ENCODE measurements at regions of chr16 and their contacts with region 1.

Region 1: GRCh38 chr16:49478107-49478506 is 104.5 kb downstream of the C16orf78 start:
- DNase-seq: no peak
- ATAC-seq: peak; percentile 85
- H3K4me3 Mint-ChIP-seq: no peak overlapping the region
- H3K27ac Mint-ChIP-seq: no peak overlapping the region
- H3K4me1 Mint-ChIP-seq: peaks cover 5% of the 10 kb centered on the region
- H3K27me3 Mint-ChIP-seq: peaks cover 4% of the 10 kb centered on the region
- CTCF ChIP-seq: no peak

Region 2: GRCh38 chr16:49463529-49463928 is 14.6 kb before region 1 on chr16:
- CTCF ChIA-PET with region 1: no interaction called
- POLR2A ChIA-PET with region 1: no interaction called
- intact Hi-C with region 1: loop called (anchors 1 kb)
- DNase-seq: no peak
- ATAC-seq: peak; percentile 77
- H3K4me3 Mint-ChIP-seq: peak overlapping the region; percentile 13
- H3K27ac Mint-ChIP-seq: peak overlapping the region; percentile 66
- H3K4me1 Mint-ChIP-seq: peaks cover 26% of the 10 kb centered on the region
- H3K27me3 Mint-ChIP-seq: peaks cover 4% of the 10 kb centered on the region
- CTCF ChIP-seq: no peak

Region 3: DNA sequence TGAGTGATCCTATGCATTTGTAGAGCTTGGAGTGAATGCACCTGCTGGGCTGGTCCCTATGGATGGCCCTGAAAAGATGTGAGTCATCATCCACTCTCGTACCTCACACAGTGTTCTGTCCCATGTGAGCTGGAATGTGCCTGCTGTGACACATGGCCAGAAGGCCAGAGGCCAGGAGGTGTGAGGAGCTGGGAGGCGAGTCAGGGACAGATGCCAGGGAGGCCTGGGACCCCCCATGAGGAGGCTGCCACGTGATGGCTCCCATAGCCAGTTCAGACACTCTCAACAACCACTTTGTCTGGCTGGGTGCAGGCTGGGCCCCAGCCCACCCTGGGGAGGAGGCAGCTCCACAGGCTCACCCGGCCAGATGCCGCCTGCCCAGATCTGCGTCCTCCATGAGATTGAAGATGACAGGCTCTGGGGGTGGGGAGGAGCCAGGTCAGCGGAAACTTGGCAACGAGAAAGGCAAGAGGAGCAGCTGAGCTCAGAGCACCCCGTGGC is 64.3 kb after region 1 on chr16:
- CTCF ChIA-PET with region 1: no interaction called
- POLR2A ChIA-PET with region 1: no interaction called
- intact Hi-C with region 1: no loop called
- DNase-seq: no peak
- ATAC-seq: no peak
- H3K4me3 Mint-ChIP-seq: no peak overlapping the region
- H3K27ac Mint-ChIP-seq: no peak overlapping the region
- H3K4me1 Mint-ChIP-seq: no peaks in the 10 kb centered on the region
- H3K27me3 Mint-ChIP-seq: peaks cover 3% of the 10 kb centered on the region
- CTCF ChIP-seq: no peak